Psoas muscle (tissue), 8 donors: ENCODE measurements at regions of chr14 and their contacts with region 1.

Region 1: GRCh38 chr14:105351920-105352851 is 37.6 kb downstream of the PACS2 start:
- DNase-seq: peak; percentile 83 to 92
- ATAC-seq: peak; percentile 93 to 98 (median 96)
- H3K4me3 ChIP-seq: no peak overlapping the region
- H3K27ac ChIP-seq: peak overlapping the region; percentile 38
- H3K4me1 ChIP-seq: peaks cover 8% of the 10 kb centered on the region
- H3K27me3 ChIP-seq: no peaks in the 10 kb centered on the region
- CTCF ChIP-seq: peak; percentile 87

Region 2: GRCh38 chr14:105203057-105203531 is 149.1 kb before region 1 on chr14:
- intact Hi-C with region 1: loop called (anchors 1 to 5 kb)
- DNase-seq: peak; percentile 80 to 88
- ATAC-seq: peak; percentile 62 to 82 (median 70)
- H3K4me3 ChIP-seq: no peak overlapping the region
- H3K27ac ChIP-seq: no peak overlapping the region
- H3K4me1 ChIP-seq: peaks cover 24% of the 10 kb centered on the region
- H3K27me3 ChIP-seq: peaks cover 0 to 20% (median under 1%) of the 10 kb centered on the region in 3 donors
- CTCF ChIP-seq: peak; percentile 94

Region 3: DNA sequence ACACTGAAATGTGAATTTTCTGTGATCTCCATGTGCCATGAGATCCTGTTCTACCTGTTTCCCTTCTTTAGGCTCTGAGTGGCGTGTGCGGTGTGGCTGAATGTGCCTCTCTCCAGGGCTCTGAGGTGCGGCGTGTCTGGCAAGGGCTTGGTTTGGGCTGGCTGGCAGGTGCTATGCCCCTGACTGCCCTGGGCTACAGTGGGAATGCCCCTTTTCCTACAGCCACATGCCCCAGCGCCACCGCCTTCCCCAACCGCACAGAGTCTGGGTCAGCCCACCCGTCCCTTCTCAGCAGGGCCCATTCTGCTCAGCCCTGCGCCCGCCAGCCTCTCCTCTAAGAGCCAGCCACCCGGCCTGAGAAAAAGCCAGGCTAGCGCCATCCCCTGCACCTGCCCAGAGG is 79.1 kb before region 1 on chr14:
- intact Hi-C with region 1: loop called in 1 of 2 experiments (anchors 5 kb)
- DNase-seq: no peak
- ATAC-seq: no peak
- H3K4me3 ChIP-seq: no peak overlapping the region
- H3K27ac ChIP-seq: no peak overlapping the region
- H3K4me1 ChIP-seq: peaks cover 20% of the 10 kb centered on the region
- H3K27me3 ChIP-seq: no peaks in the 10 kb centered on the region
- CTCF ChIP-seq: no peak

Region 4: DNA sequence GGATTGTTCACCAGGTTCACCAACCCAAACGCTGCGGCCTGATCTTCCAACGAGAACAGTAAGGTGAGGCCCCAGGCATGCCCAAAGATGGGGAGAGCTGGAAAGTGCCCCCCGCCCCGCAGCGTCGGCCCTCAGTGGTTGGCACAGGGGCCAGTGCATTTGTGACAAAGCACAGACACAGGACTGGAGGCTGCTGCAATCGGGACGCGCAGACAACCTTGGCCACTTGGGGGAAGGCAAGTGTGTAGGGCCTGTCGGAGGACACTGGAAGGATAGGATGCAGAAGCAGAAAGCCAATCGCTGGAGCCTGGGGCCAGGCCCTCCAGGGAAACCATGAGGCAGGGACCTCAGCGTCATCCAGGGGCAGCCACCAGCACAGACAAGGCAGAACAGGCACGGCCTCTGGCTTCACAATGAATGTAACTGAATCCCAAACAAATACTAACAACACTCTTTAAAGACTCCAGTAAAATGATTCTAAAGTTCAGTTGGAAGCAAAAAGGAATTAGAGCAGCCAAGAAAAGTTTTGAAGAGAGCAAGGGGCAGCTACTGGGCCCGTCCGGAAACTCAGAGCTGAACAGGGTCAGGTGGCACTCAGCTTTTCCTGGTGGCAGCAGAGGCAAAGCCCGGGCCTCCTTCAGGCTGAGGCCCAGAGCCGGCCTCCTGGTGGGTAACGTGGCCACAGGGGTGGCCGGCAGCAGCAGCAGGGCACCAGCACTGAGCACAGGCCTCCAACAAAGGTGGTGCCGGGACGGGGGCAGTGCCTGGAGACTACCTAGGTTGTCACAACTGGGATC is 64.7 kb before region 1 on chr14:
- intact Hi-C with region 1: loop called in 1 of 2 experiments (anchors 5 kb)
- DNase-seq: no peak
- ATAC-seq: no peak
- H3K4me3 ChIP-seq: no peak overlapping the region
- H3K27ac ChIP-seq: no peak overlapping the region
- H3K4me1 ChIP-seq: peaks cover 12% of the 10 kb centered on the region
- H3K27me3 ChIP-seq: no peaks in the 10 kb centered on the region
- CTCF ChIP-seq: no peak

Region 5: GRCh38 chr14:105314287-105315200 is 37.6 kb before region 1 on chr14 and contains the start of gene PACS2:
- intact Hi-C with region 1: loop called (anchors 5 kb)
- DNase-seq: peak; percentile 86 to 88
- ATAC-seq: peak; percentile 85 to 89 (median 88)
- H3K4me3 ChIP-seq: peak within 1 kb of the TSS; percentile 84
- H3K27ac ChIP-seq: peak within 1 kb of the TSS; percentile 86
- H3K4me1 ChIP-seq: peaks cover 24% of the 10 kb centered on the region
- H3K27me3 ChIP-seq: no peaks in the 10 kb centered on the region
- CTCF ChIP-seq: no peak
- total RNA-seq, gene PACS2: 67.8 to 79.1 (median 75.3) TPM

Region 6: GRCh38 chr14:105398726-105399465 is 46.7 kb after region 1 on chr14:
- intact Hi-C with region 1: no loop called
- DNase-seq: no peak
- ATAC-seq: peak; percentile 47 to 61 (median 48)
- H3K4me3 ChIP-seq: peak overlapping the region; percentile 98
- H3K27ac ChIP-seq: peak overlapping the region; percentile 98
- H3K4me1 ChIP-seq: peaks cover 18% of the 10 kb centered on the region
- H3K27me3 ChIP-seq: no peaks in the 10 kb centered on the region
- CTCF ChIP-seq: no peak

Region 7: DNA sequence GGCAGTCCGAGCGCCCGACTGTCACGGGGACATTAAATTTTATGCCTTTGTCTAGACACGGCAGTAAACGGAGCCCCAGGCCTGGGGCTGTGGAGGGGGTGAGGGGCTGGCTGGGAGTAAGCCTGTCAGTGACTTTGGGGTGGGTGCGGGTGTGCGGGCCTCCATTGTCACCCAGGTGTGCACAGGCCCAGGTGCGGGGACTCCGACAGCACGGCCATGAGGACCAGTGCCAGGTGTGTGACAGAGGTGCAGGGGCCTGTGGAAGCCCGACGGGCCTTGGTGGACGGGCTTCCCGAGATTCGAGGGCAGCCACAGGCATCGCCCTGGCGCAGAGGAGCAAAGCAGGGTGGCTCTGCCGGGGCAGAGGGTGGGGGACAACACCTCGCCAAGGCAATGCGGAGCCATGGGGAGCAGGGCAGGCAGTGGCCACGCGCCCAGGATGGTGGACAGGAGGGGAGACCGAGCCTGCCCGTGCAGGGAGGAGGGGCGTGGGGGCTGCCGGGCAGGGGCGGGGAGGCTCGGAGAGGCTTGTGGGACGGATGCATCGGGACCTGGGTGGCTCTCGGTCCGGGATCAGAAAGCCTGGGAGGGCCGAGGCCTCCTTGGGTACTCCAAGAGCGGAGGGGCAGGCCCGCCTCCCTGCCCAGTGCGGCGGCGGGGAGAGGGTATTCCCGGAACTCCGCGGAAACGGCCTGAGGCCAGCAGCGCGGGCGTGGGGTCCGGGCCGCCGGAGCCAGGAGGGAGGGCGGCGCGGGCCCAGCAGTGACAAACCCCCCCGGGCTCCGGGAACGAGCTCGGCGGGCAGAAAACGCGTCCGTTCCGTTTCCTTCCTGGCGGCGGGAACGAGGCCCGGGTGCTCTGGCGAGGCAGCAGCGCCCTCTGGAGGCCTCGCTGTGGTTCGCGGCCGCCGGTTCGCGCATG is 175.7 kb after region 1 on chr14:
- intact Hi-C with region 1: no loop called
- DNase-seq: peak; percentile 82 to 88
- ATAC-seq: peak; percentile 80 to 95 (median 89)
- H3K4me3 ChIP-seq: peak overlapping the region; percentile 77
- H3K27ac ChIP-seq: no peak overlapping the region
- H3K4me1 ChIP-seq: peaks cover 17% of the 10 kb centered on the region
- H3K27me3 ChIP-seq: peaks cover 0 to 46% (median 12%) of the 10 kb centered on the region in 3 donors
- CTCF ChIP-seq: peak; percentile 90